Natural killer cell (primary cell): ENCODE measurements at regions of chr18 and their contacts with region 1.

Region 1: DNA sequence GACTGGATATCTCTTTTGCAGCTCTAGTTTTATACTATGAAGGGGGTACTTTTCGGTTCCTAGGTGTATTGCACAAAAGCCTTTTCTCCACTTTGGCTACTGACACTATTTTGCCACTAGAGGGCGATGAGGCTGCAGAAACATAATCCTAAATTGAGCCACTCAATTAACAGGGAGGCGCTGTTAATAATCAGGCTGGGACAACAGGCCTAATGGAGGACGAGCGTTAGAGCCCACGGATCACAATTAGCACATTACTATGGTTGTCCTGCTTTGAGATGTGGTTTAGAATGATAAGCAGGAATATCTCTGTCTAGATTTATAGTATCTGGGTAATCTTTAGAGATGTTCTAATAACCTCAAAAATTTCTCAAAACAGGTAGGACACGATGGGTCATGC is 62.2 kb upstream of the PMAIP1 start:
- DNase-seq: peak in 1 of 2 donors; percentile 73
- ATAC-seq: peak; percentile 72 to 80 (median 75)
- H3K4me3 ChIP-seq: no peak overlapping the region
- H3K4me3 Mint-ChIP-seq: no peak overlapping the region
- H3K27ac ChIP-seq: no peak overlapping the region
- H3K27ac Mint-ChIP-seq: no peak overlapping the region
- H3K4me1 ChIP-seq: no peaks in the 10 kb centered on the region
- H3K4me1 Mint-ChIP-seq: peaks cover 0 to 5% of the 10 kb centered on the region in 2 donors
- H3K27me3 ChIP-seq: no peaks in the 10 kb centered on the region
- H3K27me3 Mint-ChIP-seq: peaks cover 0 to 4% of the 10 kb centered on the region in 2 donors
- CTCF ChIP-seq: peak; percentile 92

Region 2: DNA sequence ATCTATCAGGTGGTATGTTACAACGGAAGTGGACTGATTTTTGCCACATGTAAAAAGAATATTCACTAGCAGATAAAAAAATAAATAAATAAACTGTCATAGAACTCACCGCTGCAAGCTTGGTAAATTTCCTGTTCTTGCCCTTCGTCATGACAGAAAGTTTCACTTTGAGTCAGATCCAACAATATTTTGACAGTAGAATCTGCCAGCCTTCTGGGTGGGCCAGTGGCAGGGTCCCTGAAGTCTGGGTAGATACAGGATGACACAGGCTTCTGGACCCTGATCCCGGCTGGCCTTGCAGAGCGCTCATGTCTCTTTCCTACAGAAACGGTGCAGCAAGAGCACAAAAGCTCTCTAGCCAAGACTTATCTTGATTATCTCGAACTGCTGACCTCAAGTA is 35.6 kb before region 1 on chr18:
- intact Hi-C with region 1: no loop called
- DNase-seq: peak in 1 of 2 donors; percentile 8
- ATAC-seq: no peak
- H3K4me3 ChIP-seq: no peak overlapping the region
- H3K4me3 Mint-ChIP-seq: no peak overlapping the region
- H3K27ac ChIP-seq: no peak overlapping the region
- H3K27ac Mint-ChIP-seq: no peak overlapping the region
- H3K4me1 ChIP-seq: peaks cover 3% of the 10 kb centered on the region
- H3K4me1 Mint-ChIP-seq: no peaks in the 10 kb centered on the region
- H3K27me3 ChIP-seq: no peaks in the 10 kb centered on the region
- H3K27me3 Mint-ChIP-seq: peaks cover 0 to 2% of the 10 kb centered on the region in 2 donors
- CTCF ChIP-seq: no peak

Region 3: DNA sequence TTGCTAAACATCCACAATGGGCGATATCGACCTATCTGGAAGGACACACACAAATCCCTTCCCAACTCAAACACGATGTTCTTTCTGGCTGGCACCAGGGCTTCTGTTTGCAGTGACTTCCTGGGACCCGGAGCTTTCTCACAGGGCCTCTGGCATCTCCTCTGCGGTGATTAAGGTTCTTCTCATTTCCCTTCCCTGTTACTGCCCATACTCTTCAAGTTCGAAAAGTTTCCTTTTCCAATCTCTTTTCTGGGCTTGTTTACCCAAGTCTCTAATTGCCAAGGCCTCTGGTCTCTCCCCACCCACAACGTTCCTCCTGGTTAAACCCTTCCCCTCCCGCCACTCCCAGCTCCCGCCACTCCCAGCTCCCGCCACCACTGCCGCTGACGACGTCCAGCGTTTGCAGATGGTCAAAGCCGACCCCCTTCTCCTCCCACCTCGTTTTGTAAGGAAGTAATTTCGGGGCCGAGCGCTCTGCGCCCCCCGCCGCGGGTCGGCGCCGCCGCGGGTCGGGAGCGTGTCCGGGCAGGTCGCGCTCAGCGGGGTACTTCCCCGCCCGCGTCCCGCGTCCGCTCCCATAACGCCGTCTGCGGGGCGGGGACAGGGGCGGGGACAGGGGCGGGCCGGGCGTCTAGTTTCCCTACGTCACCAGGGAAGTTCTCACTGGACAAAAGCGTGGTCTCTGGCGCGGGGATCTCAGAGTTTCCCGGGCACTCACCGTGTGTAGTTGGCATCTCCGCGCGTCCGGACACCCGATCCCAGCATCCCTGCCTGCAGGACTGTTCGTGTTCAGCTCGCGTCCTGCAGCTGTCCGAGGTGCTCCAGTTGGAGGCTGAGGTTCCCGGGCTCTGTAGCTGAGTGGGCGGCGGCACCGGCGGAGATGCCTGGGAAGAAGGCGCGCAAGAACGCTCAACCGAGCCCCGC is 62.0 kb after region 1 on chr18 and contains the start of gene PMAIP1:
- intact Hi-C with region 1: loop called (anchors 1 kb)
- DNase-seq: peak; percentile 91
- ATAC-seq: peak; percentile 71 to 91 (median 84)
- H3K4me3 ChIP-seq: peak within 1 kb of the TSS; percentile 97
- H3K4me3 Mint-ChIP-seq: peak within 1 kb of the TSS; percentile 97
- H3K27ac ChIP-seq: peak within 1 kb of the TSS; percentile 95
- H3K27ac Mint-ChIP-seq: peak within 1 kb of the TSS; percentile 90 to 98
- H3K4me1 ChIP-seq: peaks cover 14% of the 10 kb centered on the region
- H3K4me1 Mint-ChIP-seq: peaks cover 46 to 49% of the 10 kb centered on the region in 2 donors
- H3K27me3 ChIP-seq: no peaks in the 10 kb centered on the region
- H3K27me3 Mint-ChIP-seq: no peaks in the 10 kb centered on the region
- CTCF ChIP-seq: no peak
- total RNA-seq, gene PMAIP1: 211 to 514 (median 264) TPM

Region 4: GRCh38 chr18:59994357-59994756 is 156.8 kb after region 1 on chr18:
- intact Hi-C with region 1: loop called (anchors 1 kb)
- DNase-seq: no peak
- ATAC-seq: no peak
- H3K4me3 ChIP-seq: no peak overlapping the region
- H3K4me3 Mint-ChIP-seq: no peak overlapping the region
- H3K27ac ChIP-seq: no peak overlapping the region
- H3K27ac Mint-ChIP-seq: no peak overlapping the region
- H3K4me1 ChIP-seq: no peaks in the 10 kb centered on the region
- H3K4me1 Mint-ChIP-seq: no peaks in the 10 kb centered on the region
- H3K27me3 ChIP-seq: peaks cover 6% of the 10 kb centered on the region
- H3K27me3 Mint-ChIP-seq: peaks cover 22 to 39% of the 10 kb centered on the region in 2 donors
- CTCF ChIP-seq: no peak

Region 5: GRCh38 chr18:60549338-60549960 is 711.9 kb after region 1 on chr18:
- intact Hi-C with region 1: loop called (anchors 5 kb)
- DNase-seq: peak in 1 of 2 donors; percentile 28
- ATAC-seq: no peak
- H3K4me3 ChIP-seq: no peak overlapping the region
- H3K4me3 Mint-ChIP-seq: no peak overlapping the region
- H3K27ac ChIP-seq: no peak overlapping the region
- H3K27ac Mint-ChIP-seq: no peak overlapping the region
- H3K4me1 ChIP-seq: no peaks in the 10 kb centered on the region
- H3K4me1 Mint-ChIP-seq: no peaks in the 10 kb centered on the region
- H3K27me3 ChIP-seq: no peaks in the 10 kb centered on the region
- H3K27me3 Mint-ChIP-seq: no peaks in the 10 kb centered on the region
- CTCF ChIP-seq: peak; percentile 45